ENCODE measurements at regions of chr7 and their contacts with region 1.

Region 1: GRCh38 chr7:27134392-27134791 is 3.8 kb upstream of the HOXA4 start:
- DNase-seq: peak; percentile 64
- H3K4me3 Mint-ChIP-seq: no peak overlapping the region
- H3K27ac Mint-ChIP-seq: peak overlapping the region; percentile 51
- H3K4me1 Mint-ChIP-seq: peaks cover 19% of the 10 kb centered on the region
- H3K27me3 Mint-ChIP-seq: peaks cover 54% of the 10 kb centered on the region

Region 2: GRCh38 chr7:27031289-27032172 is 102.9 kb before region 1 on chr7:
- CTCF ChIA-PET with region 1: no interaction called
- intact Hi-C with region 1: loop called (anchors 2 kb)
- DNase-seq: no peak
- H3K4me3 Mint-ChIP-seq: no peak overlapping the region
- H3K27ac Mint-ChIP-seq: peak overlapping the region; percentile 61
- H3K4me1 Mint-ChIP-seq: peaks cover 26% of the 10 kb centered on the region
- H3K27me3 Mint-ChIP-seq: no peaks in the 10 kb centered on the region

Region 3: DNA sequence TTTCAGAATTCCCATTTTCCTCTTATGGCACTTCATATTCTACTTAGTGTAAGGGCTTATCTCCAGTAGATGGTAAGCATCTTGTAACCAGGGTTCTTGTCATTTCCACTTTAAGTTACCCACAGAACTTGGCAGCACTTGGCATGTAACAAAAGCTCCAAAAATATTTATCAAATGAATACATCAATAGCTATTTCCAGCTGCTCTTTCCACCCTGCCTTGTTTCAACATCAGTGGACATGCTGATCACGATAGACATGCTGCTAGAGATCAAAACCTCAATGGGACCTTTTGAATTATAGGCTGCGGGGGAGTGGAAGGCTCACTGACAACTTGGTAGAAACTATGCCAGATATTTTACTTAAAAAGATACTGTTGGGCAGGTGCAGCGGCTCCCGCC is 71.4 kb before region 1 on chr7:
- CTCF ChIA-PET with region 1: no interaction called
- intact Hi-C with region 1: no loop called
- DNase-seq: no peak
- H3K4me3 Mint-ChIP-seq: no peak overlapping the region
- H3K27ac Mint-ChIP-seq: no peak overlapping the region
- H3K4me1 Mint-ChIP-seq: no peaks in the 10 kb centered on the region
- H3K27me3 Mint-ChIP-seq: peaks cover 8% of the 10 kb centered on the region

Region 4: GRCh38 chr7:27124096-27124901 is 10.1 kb before region 1 on chr7:
- CTCF ChIA-PET with region 1: no interaction called
- intact Hi-C with region 1: no loop called
- DNase-seq: no peak
- H3K4me3 Mint-ChIP-seq: no peak overlapping the region
- H3K27ac Mint-ChIP-seq: no peak overlapping the region
- H3K4me1 Mint-ChIP-seq: no peaks in the 10 kb centered on the region
- H3K27me3 Mint-ChIP-seq: peaks cover 28% of the 10 kb centered on the region

Region 5: DNA sequence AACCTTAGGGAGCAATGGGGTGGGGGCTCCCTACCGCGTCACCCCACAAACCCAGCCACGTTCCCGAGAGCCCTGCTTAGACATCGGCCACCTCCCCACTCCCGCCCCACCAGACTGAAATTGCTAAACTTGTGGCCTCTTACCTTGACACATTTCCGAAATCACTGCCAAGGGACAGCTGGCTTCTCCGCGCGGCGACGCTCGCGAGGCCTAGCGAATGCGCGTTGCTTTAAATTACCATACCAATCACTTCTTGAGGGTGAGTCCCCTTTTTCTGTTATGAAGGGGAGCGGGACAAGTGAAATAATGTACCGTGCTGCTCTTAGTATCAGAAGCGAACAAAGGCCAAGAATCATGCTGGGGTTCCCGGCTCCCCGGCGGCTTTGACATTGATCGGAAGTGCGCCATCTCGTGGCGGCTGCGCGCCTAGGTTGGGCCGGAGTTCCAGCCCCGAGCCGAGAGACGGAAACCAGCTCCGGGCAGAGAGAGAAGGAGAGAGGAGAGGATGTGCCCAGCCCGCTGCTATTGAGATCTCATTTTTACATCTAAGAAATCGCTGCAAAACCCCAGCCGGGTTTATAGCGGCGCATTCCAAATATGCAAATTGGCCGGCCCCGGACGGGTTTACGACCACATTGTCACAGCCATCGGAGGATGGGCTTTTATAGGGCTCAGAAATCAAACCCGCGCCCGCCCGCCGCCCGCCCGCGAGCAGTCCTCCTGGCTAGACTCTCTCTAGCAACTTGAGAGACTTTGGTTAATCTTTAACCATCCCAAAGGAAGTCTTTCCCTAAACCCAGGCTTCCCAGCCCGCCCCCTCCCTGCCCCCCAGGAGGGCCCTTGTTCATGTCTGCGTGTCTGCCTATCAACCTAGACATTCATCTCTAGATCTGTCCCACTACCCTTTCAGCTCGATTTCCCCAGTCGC is 45.4 kb after region 1 on chr7:
- CTCF ChIA-PET with region 1: no interaction called
- intact Hi-C with region 1: no loop called
- DNase-seq: peak; percentile 57
- H3K4me3 Mint-ChIP-seq: peak overlapping the region; percentile 4
- H3K27ac Mint-ChIP-seq: no peak overlapping the region
- H3K4me1 Mint-ChIP-seq: peaks cover 8% of the 10 kb centered on the region
- H3K27me3 Mint-ChIP-seq: peaks cover 72% of the 10 kb centered on the region

Region 6: GRCh38 chr7:27793780-27794179 is 659.4 kb after region 1 on chr7:
- CTCF ChIA-PET with region 1: no interaction called
- intact Hi-C with region 1: no loop called
- DNase-seq: no peak
- H3K4me3 Mint-ChIP-seq: no peak overlapping the region
- H3K27ac Mint-ChIP-seq: no peak overlapping the region
- H3K4me1 Mint-ChIP-seq: peaks cover 2% of the 10 kb centered on the region
- H3K27me3 Mint-ChIP-seq: no peaks in the 10 kb centered on the region

Measured in activated naive CD4-positive, alpha-beta T cell treated with anti-CD3 and anti-CD28 coated beads for 36 hours (primary cell).